Ascending aorta (tissue), 2 donors: ENCODE measurements at regions of chr1 and their contacts with region 1.

Region 1: GRCh38 chr1:155001675-155002463 is 733 bp upstream of the ZBTB7B start:
- DNase-seq: peak; percentile 99 to 100
- H3K4me3 ChIP-seq: peak overlapping the region; percentile 92 to 94
- H3K27ac ChIP-seq: peak overlapping the region; percentile 97 to 98
- H3K4me1 ChIP-seq: peaks cover 19 to 41% of the 10 kb centered on the region in 2 donors
- H3K27me3 ChIP-seq: no peaks in the 10 kb centered on the region
- CTCF ChIP-seq: peak in 2 of 3 experiments; percentile 50 to 59

Region 2: DNA sequence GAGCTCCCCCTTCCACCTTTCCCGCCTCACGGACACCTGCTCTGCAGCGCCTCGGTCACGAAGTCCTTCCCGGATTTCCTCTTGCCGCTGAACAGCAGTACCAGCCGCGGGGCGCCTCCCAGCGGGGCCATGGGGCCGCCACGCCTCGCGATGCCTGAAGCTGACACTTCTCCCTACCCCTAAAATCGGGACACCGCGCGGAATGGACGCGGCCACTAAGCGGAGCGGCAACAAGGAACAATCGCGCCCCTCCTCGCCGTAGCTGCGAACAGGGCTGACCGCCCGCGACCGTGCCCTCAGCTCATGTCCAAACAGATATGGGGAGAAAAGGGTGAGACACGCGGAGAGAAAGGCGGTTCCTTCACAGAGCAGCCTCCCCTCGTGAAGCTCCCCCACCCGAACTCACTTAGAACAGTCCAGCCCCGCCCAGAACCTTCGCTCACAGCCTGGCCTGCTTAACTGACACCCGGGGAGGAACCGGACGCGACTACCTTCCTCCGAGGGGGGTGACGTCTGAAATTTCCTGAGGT is 65.2 kb before region 1 on chr1 and contains the start of gene PMVK:
- intact Hi-C with region 1: loop called (anchors 1 kb)
- DNase-seq: peak; percentile 84 to 98
- H3K4me3 ChIP-seq: peak within 1 kb of the TSS; percentile 73 to 75
- H3K27ac ChIP-seq: peak within 1 kb of the TSS; percentile 97 to 98
- H3K4me1 ChIP-seq: peaks cover 0 to 13% of the 10 kb centered on the region in 2 donors
- H3K27me3 ChIP-seq: no peaks in the 10 kb centered on the region
- CTCF ChIP-seq: peak in 2 of 3 experiments; percentile 26 to 42
- total RNA-seq, gene PMVK: 9.6 TPM

Region 3: GRCh38 chr1:154974063-154974807 is 27.6 kb before region 1 on chr1 and contains the start of gene CKS1B:
- intact Hi-C with region 1: loop called (anchors 1 kb)
- DNase-seq: peak; percentile 97 to 99
- H3K4me3 ChIP-seq: peak within 1 kb of the TSS; percentile 61 to 82
- H3K27ac ChIP-seq: peak within 1 kb of the TSS; percentile 95 to 99
- H3K4me1 ChIP-seq: peaks cover 22 to 33% of the 10 kb centered on the region in 2 donors
- H3K27me3 ChIP-seq: no peaks in the 10 kb centered on the region
- CTCF ChIP-seq: no peak
- total RNA-seq, gene CKS1B: 40.4 TPM

Region 4: GRCh38 chr1:154989195-154989860 is 12.5 kb before region 1 on chr1:
- intact Hi-C with region 1: no loop called
- DNase-seq: no peak
- H3K4me3 ChIP-seq: no peak overlapping the region
- H3K27ac ChIP-seq: no peak overlapping the region
- H3K4me1 ChIP-seq: no peaks in the 10 kb centered on the region
- H3K27me3 ChIP-seq: no peaks in the 10 kb centered on the region
- CTCF ChIP-seq: no peak

Region 5: GRCh38 chr1:155017041-155017945 is 15.4 kb after region 1 on chr1:
- intact Hi-C with region 1: loop called (anchors 1 kb)
- DNase-seq: peak; percentile 68 to 96
- H3K4me3 ChIP-seq: peak overlapping the region; percentile 42 to 59
- H3K27ac ChIP-seq: peak overlapping the region; percentile 82 to 89
- H3K4me1 ChIP-seq: peaks cover 7 to 15% of the 10 kb centered on the region in 2 donors
- H3K27me3 ChIP-seq: no peaks in the 10 kb centered on the region
- CTCF ChIP-seq: peak; percentile 99 to 100 (median 99)

Region 6: GRCh38 chr1:155135415-155136028 is 133.7 kb after region 1 on chr1 and contains the start of gene SLC50A1:
- intact Hi-C with region 1: loop called (anchors 5 kb)
- DNase-seq: peak; percentile 78 to 98
- H3K4me3 ChIP-seq: peak within 1 kb of the TSS; percentile 76 to 80
- H3K27ac ChIP-seq: peak within 1 kb of the TSS; percentile 97 to 100
- H3K4me1 ChIP-seq: peaks cover 9 to 25% of the 10 kb centered on the region in 2 donors
- H3K27me3 ChIP-seq: no peaks in the 10 kb centered on the region
- CTCF ChIP-seq: peak; percentile 26 to 72 (median 39)
- total RNA-seq, gene SLC50A1: 9.4 TPM